BJ (cell line): ENCODE measurements at regions of chr1 and their contacts with region 1.

Region 1: DNA sequence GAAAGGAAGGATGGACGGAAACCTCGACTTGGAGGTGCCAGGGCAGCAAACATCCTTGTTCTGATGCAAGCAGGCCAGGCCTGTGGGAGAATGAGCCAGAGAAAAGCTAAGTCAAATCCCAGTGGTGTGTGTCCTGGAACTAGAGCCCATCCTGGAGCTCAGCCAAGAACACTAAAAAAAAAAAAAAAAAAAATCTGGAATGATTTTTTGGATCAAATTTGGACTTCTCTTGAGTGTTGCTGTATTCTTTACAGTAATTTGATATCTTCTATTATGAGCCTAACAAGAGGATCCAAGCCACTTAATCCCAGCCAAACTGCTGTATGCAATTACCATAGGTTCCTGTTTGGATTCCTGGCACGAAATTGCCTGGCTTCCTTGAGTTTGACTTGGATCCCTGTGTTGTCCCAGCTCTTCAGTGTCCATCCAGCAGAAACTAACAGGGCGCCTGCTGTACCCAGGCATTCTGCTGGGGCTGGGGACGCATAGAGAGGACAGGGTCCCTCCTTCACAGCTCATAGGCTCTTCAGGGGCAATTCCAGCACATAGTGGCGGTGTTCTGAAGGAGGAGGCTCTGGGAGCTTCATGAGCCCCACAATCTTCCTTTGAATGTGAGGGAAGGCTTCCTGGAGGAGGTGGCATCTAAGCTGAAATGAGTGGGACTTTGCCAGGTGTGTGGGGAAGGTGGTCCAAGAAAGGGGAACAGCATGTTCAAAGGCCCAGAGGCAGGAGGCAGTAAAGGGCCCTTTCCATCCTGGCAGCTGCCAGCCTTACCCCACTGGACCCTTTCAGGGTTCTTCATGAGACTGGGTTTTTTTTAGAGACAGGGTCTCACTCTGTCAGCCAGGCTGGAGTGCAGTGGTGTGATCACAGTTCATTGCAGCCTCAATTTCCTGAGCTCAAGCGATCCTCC is 24.7 kb downstream of the EPHX1 start:
- DNase-seq: peak; percentile 39
- H3K4me3 ChIP-seq: no peak overlapping the region
- H3K27me3 ChIP-seq: no peaks in the 10 kb centered on the region
- CTCF ChIP-seq: no peak

Region 2: GRCh38 chr1:225809842-225810578 is 24.7 kb before region 1 on chr1 and contains the start of gene EPHX1:
- CTCF ChIA-PET with region 1: no interaction called
- POLR2A ChIA-PET with region 1: interaction called, 10 read pairs
- DNase-seq: peak; percentile 32
- H3K4me3 ChIP-seq: peak within 1 kb of the TSS; percentile 73
- H3K27me3 ChIP-seq: no peaks in the 10 kb centered on the region
- CTCF ChIP-seq: peak; percentile 59
- polyA plus RNA-seq, gene EPHX1: 17.9 and 34.3 TPM in 2 replicates

Region 3: DNA sequence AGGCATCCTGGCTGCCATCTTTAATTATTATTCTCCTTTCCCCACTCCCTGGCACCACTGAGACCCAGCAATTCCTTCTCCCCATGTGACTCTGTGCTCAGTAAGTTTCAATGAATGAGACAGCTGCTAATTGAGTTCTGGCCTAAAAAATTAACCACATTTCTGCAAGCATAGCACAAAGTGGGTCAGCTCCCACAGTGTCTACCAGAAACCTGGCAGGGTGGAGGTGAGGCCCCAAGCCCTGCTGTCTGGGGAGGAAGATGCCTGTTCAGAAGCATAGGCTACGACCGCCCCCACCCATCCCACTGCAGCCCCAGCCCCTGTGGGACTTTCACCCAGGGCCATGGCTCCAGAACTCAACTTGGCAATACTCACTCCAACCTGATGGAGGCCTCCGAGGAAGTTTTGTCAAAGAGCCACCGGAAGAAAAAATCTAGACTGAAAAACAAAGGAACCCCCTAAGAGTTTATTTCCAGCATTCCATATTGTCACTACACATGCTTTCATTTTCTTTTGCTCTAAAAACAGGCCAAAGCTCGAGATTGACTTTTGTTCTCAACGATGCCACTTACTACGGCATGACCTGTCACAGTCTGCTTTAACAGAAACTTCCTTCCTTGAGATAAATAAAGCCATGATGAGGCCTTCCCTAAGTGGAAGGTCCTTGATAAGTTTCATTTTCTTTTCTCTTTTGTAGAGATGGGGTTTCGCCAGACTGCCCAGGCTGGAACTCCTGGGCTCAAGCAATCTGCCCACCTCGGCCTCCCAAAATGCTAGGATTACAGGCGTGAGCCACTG is 21.0 kb after region 1 on chr1:
- CTCF ChIA-PET with region 1: no interaction called
- POLR2A ChIA-PET with region 1: interaction called, 10 read pairs
- DNase-seq: no peak
- H3K4me3 ChIP-seq: no peak overlapping the region
- H3K27me3 ChIP-seq: no peaks in the 10 kb centered on the region
- CTCF ChIP-seq: no peak